Common myeloid progenitor, CD34-positive (primary cell): ENCODE measurements at regions of chr11 and their contacts with region 1.

Region 1: DNA sequence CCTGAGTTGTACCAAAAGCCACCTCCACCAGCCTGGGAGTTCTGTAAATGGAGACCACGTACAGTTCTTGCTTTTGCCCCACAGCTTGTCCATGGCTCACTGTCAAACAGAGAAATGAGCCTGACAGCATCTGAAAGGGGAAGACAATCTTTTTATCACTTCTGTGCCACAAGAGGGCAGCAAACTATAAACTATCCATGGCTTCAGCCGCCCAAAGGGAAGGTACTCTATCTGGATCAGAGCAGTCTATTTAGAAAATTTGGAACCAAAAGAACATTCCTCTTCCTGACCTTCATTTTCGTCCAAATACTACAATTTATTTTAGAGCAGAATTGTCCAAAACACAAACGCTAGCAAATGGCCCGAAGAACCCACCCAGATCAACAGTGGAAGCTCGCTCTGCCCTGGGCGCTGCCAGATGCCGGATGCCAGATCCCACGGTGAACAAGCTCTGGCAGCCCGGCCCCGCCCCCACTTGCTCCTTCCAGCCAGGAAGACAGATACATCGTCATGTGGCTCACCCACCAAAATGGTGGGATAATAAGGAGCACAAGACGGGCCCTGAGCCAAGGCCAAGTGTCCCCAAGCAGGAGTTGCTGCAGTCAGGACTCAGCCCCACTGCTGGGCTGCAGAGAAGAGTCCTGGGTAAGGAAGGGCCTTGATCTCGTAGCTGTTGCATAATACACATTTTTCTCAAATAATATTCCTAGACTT is 23.9 kb upstream of the SCGB1A1 start:
- DNase-seq: peak; percentile 84 to 89 (median 86)
- H3K4me3 ChIP-seq: no peak overlapping the region
- H3K27ac ChIP-seq: no peak overlapping the region
- H3K4me1 ChIP-seq: peaks cover 0 to 79% (median 27%) of the 10 kb centered on the region in 4 experiments
- H3K27me3 ChIP-seq: no peaks in the 10 kb centered on the region

Region 2: DNA sequence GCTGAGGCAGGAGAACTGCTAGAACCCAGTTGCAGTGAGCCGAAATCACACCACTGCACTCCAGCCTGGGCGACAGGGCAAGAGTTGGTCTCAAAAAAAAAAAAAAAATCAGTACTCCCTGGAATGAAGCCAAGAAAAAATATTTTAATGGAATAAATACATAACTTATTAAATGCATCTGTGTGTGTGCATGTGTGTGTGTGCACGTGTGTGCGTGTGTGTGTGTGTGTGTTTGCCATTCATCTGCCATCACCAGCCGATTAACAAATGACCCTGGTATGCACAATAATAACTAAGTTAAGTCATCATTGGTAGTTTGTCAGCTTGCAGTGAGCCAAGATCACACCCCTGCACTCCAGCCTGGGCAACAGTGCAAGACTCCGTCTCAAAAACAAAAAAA is 11.2 kb before region 1 on chr11:
- CTCF ChIA-PET with region 1: interaction called, 29 read pairs
- POLR2A ChIA-PET with region 1: no interaction called
- DNase-seq: no peak
- H3K4me3 ChIP-seq: no peak overlapping the region
- H3K27ac ChIP-seq: no peak overlapping the region
- H3K4me1 ChIP-seq: peaks cover 0 to 4% (median 0%) of the 10 kb centered on the region in 4 experiments
- H3K27me3 ChIP-seq: no peaks in the 10 kb centered on the region

Region 3: GRCh38 chr11:62419314-62419929 is 24.4 kb after region 1 on chr11:
- CTCF ChIA-PET with region 1: interaction called, 73 read pairs
- POLR2A ChIA-PET with region 1: interaction called, 3 read pairs
- DNase-seq: no peak
- H3K4me3 ChIP-seq: no peak overlapping the region
- H3K27ac ChIP-seq: peak overlapping the region in 1 of 2 experiments; percentile 34
- H3K4me1 ChIP-seq: peaks cover 0 to 3% (median under 1%) of the 10 kb centered on the region in 4 experiments
- H3K27me3 ChIP-seq: no peaks in the 10 kb centered on the region

Region 4: GRCh38 chr11:62556108-62556871 is 161.3 kb after region 1 on chr11:
- CTCF ChIA-PET with region 1: interaction called, 45 read pairs
- POLR2A ChIA-PET with region 1: interaction called, 3 read pairs
- DNase-seq: peak; percentile 93 to 99 (median 98)
- H3K4me3 ChIP-seq: peak overlapping the region in 6 of 7 experiments; percentile 4 to 70 (median 52)
- H3K27ac ChIP-seq: peak overlapping the region; percentile 96 to 97
- H3K4me1 ChIP-seq: peaks cover 23 to 93% (median 89%) of the 10 kb centered on the region in 4 experiments
- H3K27me3 ChIP-seq: no peaks in the 10 kb centered on the region